ENCODE measurements at regions of chr2 and their contacts with region 1.

Region 1: DNA sequence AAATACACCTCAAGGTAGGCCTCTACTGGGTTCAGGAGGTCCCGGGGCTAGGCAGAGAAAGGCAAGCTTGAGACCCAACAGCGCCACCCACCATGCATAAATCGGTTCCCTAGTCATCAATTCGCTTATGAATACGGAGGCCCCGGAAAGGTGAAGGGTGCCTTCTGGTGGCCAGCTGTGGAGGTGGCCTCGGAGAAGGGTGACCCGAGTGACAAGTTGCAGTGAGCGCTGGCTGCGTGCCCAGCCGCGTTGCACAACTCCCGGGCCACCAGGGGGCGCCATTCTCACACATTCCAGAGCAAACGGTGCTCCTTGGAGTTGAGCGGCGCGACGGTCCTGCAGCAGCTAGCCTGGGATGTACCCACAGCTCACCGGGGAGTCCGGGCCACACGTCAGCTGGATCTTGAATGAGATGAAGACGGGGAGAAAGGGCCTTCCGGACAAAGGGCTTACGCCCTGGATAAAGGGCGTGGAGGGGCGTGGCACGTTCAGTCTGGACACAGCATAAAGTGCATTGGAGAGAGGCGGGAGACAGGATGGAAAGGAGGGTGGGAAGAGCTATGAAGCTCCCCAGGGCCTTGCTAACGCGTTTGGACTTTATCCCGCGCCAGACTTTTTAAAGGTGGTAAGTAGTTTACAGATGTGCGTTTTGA is 20.4 kb downstream of the TMSB10 start:
- DNase-seq: peak; percentile 82
- CTCF ChIP-seq: peak; percentile 98

Region 2: DNA sequence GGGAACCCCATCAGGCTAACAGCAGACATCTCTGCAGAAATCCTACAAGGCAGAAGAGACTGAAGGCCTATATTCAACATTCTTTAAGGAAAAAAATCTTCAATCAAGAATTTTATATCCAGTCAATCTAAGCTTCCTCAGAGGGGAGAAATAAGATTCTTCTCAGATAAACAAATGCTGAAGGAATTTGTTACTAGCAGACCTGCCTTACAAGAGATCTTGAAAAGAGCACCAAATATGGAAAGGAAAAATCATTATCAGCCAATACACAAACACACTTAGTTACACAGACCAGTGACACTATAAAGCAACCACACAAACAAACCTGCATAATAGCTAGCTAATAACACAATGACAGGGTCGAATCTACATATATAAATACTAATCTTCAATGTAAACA is 563.3 kb before region 1 on chr2:
- in situ Hi-C with region 1: no loop called
- DNase-seq: no peak
- CTCF ChIP-seq: no peak

Region 3: DNA sequence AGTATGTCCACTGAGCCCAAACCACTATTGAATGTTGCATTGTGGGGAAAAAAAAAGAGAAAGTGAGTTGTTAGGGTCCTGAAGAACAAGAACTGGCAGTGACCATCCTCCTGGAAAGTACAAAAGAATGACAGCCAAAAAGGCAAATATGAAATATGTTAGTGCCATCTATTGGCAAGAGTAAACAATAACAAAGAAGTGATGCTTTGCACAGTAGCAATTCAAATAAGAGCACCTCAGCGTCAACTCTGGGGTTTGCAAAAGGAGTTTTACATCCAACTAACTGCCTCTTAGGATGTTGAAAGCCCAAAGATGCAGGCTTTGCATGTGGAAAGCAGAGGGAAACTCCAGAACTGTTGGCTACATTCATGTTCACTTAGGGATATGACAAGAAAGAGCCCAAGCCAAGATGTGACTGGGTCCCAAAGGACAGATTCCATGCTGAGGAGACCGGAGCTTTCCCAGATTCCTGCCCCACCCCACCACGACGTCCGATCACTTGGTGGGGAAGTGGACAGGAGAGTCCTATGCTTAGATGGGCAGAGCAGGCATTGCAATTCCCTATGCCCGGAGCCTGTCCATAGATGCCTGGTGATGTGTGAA is 60.6 kb before region 1 on chr2:
- in situ Hi-C with region 1: loop called (anchors 10 kb)
- DNase-seq: peak; percentile 61
- CTCF ChIP-seq: no peak

Region 4: DNA sequence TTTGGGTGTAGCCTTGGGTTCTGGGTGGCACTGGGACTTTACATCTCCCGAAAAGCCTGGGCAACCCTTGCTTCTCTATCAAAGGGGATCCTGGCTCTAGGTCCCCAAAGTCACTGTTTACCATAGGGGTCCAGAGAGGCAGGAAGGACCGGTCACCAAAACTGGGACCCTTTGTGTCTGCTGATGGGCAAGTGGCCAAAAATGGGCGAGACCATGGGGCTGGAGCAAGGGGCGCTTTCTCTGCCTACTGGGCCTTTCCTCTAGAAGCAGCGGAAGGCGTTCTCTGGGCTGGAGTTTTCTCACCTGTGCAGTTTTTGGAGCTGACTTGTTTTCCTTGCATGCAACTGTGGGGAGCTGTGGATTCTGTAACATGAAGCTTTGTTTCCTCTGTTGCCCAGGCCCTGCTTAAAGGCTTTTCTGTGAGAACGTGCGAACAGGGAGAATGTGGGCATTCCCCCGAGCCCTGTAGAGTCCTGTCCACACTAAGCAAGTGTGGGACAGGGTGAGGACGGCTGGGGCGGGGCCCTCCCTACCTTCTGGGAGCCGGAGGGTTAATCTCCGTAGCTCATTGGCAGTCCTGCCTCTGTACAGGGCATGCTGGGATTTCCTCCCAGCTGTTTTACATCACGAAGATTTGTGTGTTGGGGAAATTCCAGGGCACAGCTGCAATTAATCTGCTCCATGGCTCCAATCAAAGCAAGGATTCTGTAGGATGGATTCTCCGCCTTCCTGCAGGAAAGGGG is 351.7 kb after region 1 on chr2:
- in situ Hi-C with region 1: loop called (anchors 25 kb)
- DNase-seq: no peak
- CTCF ChIP-seq: no peak